GM18951 (cell line): ENCODE measurements at regions of chr5 and their contacts with region 1.

Region 1: GRCh38 chr5:55711968-55712859 is at the start of gene SLC38A9:
- POLR2A ChIP-seq: peak; percentile 79

Region 2: GRCh38 chr5:55172051-55172899 is 539.9 kb before region 1 on chr5:
- in situ Hi-C with region 1: loop called (anchors 10 kb)
- POLR2A ChIP-seq: no peak

Region 3: GRCh38 chr5:55327281-55327680 is 384.9 kb before region 1 on chr5:
- in situ Hi-C with region 1: no loop called
- POLR2A ChIP-seq: no peak

Region 4: DNA sequence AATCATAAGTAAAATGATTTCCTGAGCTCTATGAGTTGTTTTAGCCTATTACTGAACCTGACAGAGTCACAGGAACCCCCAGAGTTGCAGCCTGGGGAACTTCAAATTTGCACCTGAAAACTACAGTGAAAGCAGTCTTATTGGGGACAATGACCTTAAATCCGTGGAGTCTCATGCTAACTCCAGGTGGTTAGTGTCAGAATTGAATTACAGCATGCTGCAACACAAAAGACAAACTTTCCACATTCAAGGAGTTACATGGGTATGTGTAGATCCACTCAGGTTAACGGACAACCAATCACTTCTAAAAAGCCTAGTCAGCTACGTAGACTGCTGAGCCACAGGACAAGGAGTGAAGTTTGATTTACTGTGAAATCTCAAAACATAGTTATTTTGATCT is 227.1 kb before region 1 on chr5:
- in situ Hi-C with region 1: no loop called
- POLR2A ChIP-seq: no peak

Region 5: GRCh38 chr5:55913466-55914413 is 201.5 kb after region 1 on chr5:
- in situ Hi-C with region 1: loop called (anchors 10 kb)
- POLR2A ChIP-seq: peak; percentile 34

Region 6: GRCh38 chr5:56962286-56962685 is 1250.1 kb after region 1 on chr5:
- in situ Hi-C with region 1: no loop called
- POLR2A ChIP-seq: no peak